SK-N-SH (cell line): ENCODE measurements at regions of chr7 and their contacts with region 1.

Region 1: DNA sequence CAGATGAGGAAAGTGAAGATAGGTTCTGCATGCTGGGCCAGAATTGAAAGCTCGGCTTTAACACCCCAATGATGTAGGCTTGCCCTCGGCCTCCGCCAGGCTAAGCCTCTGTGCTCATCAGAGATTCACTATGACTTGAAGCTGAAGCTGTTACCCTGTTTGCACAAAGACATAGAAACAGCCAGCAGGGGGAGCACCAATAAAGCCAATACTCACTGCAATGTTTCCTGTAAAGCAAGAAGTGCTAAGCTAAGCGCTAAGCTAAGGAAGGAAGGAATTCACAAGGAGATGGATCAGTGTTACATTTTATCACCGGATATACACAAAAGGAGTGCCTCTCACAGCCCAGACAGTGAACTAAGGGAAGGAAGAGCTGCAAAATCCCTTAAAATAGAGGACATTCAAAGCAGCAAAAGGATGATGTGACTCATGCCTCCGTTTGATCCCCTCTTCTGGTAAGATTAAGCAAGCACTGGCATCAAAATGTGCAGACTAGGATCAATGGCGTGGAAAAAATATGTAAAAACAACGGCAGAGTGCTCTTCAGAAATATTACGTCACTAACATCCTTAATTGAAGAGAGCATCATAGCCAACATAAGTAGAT is 153.8 kb downstream of the COBL start:
- DNase-seq: peak; percentile 64
- H3K4me3 ChIP-seq: no peak overlapping the region; a peak in 1 of 4 replicates
- H3K27ac ChIP-seq: no peak overlapping the region
- H3K4me1 ChIP-seq: no peaks in the 10 kb centered on the region
- H3K27me3 ChIP-seq: peaks cover 12% of the 10 kb centered on the region; the same call in 1 of the 2 replicates
- CTCF ChIP-seq: peak; percentile 99
- EP300 ChIP-seq: no peak
- RAD21 ChIP-seq: peak; percentile 83

Region 2: DNA sequence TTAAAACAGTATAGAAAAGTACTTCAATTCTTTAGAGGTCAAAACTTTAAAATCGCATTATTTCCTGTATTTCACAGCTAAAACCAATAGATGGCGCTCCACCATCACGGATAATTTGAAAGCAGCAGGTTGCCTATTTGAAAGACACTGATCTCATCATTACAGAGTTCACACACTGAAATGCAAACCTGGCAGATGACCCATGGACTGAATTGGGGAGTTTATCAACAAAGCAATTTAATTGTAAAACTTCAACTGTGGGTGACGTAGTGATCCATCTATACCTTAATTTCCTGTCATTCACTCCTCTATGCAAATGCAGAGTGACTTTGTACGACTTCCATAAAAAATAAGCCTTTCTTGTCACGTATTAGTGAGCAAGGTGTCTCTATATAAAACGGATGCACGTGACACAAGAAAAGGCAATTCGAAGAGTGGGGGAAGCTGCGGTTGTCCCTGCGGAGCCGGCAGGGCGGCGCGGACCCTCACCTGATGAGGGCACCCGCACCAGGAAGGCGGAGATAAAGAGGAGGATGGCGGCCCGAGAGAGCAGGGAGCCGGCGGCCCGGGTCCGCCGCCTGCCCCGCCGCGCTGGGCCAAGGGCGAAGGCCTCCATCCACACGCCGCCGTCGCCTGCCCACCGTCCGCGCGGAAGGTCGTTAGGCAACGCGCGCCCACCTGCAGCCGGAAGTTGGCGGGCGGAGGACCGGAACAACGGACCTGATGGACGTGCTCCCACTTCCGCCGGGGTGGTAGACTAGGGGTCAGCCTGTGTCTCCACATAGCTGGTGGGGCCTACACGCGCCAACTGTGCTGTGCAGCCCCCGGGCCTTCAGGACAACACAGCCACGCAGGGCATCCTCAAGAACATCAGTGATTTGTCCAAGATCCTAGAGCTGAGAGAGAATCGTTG is 1070.0 kb before region 1 on chr7 and contains the start of gene ZPBP:
- CTCF ChIA-PET with region 1: interaction called, 108 read pairs
- POLR2A ChIA-PET with region 1: no interaction called
- DNase-seq: peak; percentile 65
- H3K4me3 ChIP-seq: no peak within 1 kb of the TSS; a peak in 1 of 4 replicates
- H3K27ac ChIP-seq: no peak within 1 kb of the TSS
- H3K4me1 ChIP-seq: no peaks in the 10 kb centered on the region
- H3K27me3 ChIP-seq: no peaks in the 10 kb centered on the region
- CTCF ChIP-seq: peak; percentile 98
- EP300 ChIP-seq: no peak
- RAD21 ChIP-seq: peak; percentile 95
- polyA plus RNA-seq, gene ZPBP: not detected in 2 replicates

Region 3: DNA sequence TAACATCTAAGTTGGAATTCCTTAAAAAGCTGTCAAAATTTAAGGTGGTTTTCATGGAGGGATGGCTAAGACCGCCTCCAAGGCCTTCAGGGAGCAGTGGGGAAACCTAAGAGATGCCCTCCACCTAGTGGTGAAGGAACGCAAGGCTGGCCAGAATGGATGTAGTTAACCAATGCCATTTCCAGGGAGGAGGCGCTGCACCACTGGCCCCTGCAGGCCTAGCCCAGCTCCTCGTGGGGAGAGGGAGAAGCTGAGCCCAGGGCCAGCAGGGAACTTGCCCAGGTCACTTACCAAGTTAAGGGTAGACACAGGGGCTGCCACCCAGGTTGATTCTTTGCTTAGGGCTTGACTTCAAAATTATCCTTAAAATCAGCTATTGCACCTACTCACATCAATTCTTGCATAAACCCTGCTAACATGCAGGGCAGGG is 744.7 kb before region 1 on chr7:
- CTCF ChIA-PET with region 1: interaction called, 10 read pairs
- POLR2A ChIA-PET with region 1: no interaction called
- DNase-seq: peak; percentile 86
- H3K4me3 ChIP-seq: no peak overlapping the region
- H3K27ac ChIP-seq: no peak overlapping the region
- H3K4me1 ChIP-seq: peaks cover 0 to 10% of the 10 kb centered on the region in 2 experiments; a peak in 1 of 4 replicates
- H3K27me3 ChIP-seq: no peaks in the 10 kb centered on the region
- CTCF ChIP-seq: peak; percentile 96
- EP300 ChIP-seq: no peak
- RAD21 ChIP-seq: peak; percentile 98

Region 4: DNA sequence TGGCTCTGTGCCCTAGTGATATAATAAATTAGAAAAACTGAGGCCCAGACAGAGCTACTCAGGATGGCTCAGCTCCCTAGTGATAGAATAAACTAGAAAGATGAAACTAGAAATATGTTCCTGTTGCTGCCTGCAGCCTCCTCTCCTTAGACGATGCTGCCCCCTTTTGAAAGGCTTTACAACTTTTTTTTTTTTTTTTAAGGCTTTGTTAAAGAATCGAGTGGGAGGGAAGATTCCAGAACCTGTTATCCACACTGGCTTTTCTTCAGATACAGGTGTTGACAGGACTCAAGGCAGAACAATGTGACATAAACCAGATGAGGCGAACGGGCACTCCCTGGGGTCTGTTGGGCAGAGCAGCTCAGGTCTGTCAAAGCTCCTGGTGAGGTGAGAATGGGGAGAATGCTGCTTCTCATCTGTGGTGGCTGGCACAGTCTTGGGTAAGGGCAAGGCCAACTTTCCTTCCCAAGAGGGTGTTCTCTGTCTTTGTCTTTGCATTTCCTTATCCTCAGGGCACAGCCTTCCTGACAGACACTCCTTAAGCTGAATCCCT is 21.3 kb before region 1 on chr7:
- CTCF ChIA-PET with region 1: interaction called, 208 read pairs
- POLR2A ChIA-PET with region 1: no interaction called
- DNase-seq: no peak
- H3K4me3 ChIP-seq: no peak overlapping the region; a peak in 1 of 4 replicates
- H3K27ac ChIP-seq: no peak overlapping the region
- H3K4me1 ChIP-seq: no peaks in the 10 kb centered on the region
- H3K27me3 ChIP-seq: peaks cover 34% of the 10 kb centered on the region
- CTCF ChIP-seq: peak; percentile 90
- EP300 ChIP-seq: no peak
- RAD21 ChIP-seq: peak; percentile 60

Region 5: GRCh38 chr7:51198654-51199053 is 35.8 kb after region 1 on chr7:
- CTCF ChIA-PET with region 1: interaction called, 23 read pairs
- POLR2A ChIA-PET with region 1: no interaction called
- DNase-seq: no peak
- H3K4me3 ChIP-seq: no peak overlapping the region
- H3K27ac ChIP-seq: no peak overlapping the region
- H3K4me1 ChIP-seq: no peaks in the 10 kb centered on the region
- H3K27me3 ChIP-seq: no peaks in the 10 kb centered on the region
- CTCF ChIP-seq: no peak
- EP300 ChIP-seq: no peak
- RAD21 ChIP-seq: no peak

Region 6: DNA sequence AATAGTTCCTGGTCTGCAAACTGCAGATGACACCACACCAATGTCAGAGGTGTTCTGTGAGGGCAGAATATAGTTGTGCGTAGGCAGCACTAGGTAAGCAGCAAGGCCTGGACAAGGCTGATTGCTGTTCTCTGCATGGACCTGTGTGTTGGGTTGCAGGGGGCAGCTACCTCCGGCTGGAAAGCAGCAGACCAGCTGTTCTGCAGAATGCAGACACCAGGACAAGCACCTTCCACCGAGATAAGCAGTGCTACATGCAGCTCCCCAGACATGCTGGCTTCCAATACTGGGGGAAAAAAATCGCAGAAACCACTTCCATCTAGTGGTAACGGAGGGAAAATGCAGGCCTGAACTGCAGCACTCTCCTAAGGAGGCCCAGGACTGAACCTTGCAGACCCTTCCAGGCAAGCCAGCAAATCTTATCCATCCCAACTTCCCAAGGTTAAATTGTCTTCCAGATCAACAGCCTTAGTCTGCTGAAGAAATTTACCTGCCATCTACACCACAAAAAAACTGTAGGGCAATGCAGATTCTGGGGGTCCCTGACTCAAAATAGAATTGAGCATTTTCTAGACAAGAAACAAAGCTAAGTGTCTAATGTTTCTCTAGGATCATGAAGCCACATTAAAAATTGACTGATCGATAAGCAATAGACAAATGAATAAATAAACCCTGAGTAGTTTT is 204.2 kb after region 1 on chr7:
- CTCF ChIA-PET with region 1: interaction called, 379 read pairs
- POLR2A ChIA-PET with region 1: interaction called, 4 read pairs
- DNase-seq: peak; percentile 81
- H3K4me3 ChIP-seq: peak overlapping the region in 1 of 2 experiments; percentile 39; a peak in 1 of 4 replicates
- H3K27ac ChIP-seq: no peak overlapping the region
- H3K4me1 ChIP-seq: peaks cover 0 to 3% of the 10 kb centered on the region in 2 experiments; a peak in 1 of 4 replicates
- H3K27me3 ChIP-seq: no peaks in the 10 kb centered on the region
- CTCF ChIP-seq: peak; percentile 41
- EP300 ChIP-seq: no peak
- RAD21 ChIP-seq: peak; percentile 89